ENCODE measurements at regions of chr1 and their contacts with region 1.

Region 1: GRCh38 chr1:112390775-112391602 is 5.0 kb upstream of the CTTNBP2NL start:
- DNase-seq: peak; percentile 74 to 90
- ATAC-seq: peak; percentile 78 to 82
- H3K4me3 ChIP-seq: peak overlapping the region; percentile 50
- H3K27ac ChIP-seq: peak overlapping the region; percentile 83 to 91
- H3K4me1 ChIP-seq: peaks cover 30% of the 10 kb centered on the region
- CTCF ChIP-seq: peak; percentile 78
- EP300 ChIP-seq: no peak
- POLR2A ChIP-seq: no peak
- RAD21 ChIP-seq: peak; percentile 85 to 86

Region 2: DNA sequence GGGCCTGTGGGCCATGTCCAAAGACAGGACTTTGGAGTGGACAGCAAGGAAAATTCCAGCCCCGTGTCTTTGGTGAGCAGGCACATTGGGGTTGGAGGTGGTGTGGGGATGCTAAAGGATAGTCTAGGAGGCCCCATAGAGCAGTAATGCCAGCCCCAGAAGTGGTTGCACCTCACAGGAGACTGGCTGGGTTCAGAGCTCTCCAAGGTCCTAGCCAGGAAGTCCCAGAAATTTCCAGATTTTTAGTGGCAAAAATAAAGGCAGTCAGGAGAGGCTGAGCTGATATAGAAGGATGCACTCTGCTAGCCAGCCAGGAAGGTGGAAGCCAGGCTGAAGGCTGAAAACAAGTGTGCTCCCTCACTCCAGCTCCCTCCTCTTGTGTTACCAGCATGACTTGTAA is 257.5 kb before region 1 on chr1:
- CTCF ChIA-PET with region 1: no interaction called
- POLR2A ChIA-PET with region 1: no interaction called
- DNase-seq: no peak
- ATAC-seq: no peak
- H3K4me3 ChIP-seq: no peak overlapping the region
- H3K27ac ChIP-seq: no peak overlapping the region
- H3K4me1 ChIP-seq: no peaks in the 10 kb centered on the region
- CTCF ChIP-seq: no peak
- EP300 ChIP-seq: no peak
- POLR2A ChIP-seq: no peak
- RAD21 ChIP-seq: no peak

Region 3: GRCh38 chr1:112369392-112370285 is 21.4 kb before region 1 on chr1:
- CTCF ChIA-PET with region 1: interaction called, 16 read pairs
- POLR2A ChIA-PET with region 1: no interaction called
- DNase-seq: peak; percentile 62 to 80
- ATAC-seq: peak; percentile 100
- H3K4me3 ChIP-seq: no peak overlapping the region
- H3K27ac ChIP-seq: no peak overlapping the region
- H3K4me1 ChIP-seq: no peaks in the 10 kb centered on the region
- CTCF ChIP-seq: peak; percentile 80
- EP300 ChIP-seq: no peak
- POLR2A ChIP-seq: no peak
- RAD21 ChIP-seq: peak; percentile 75 to 85

Region 4: DNA sequence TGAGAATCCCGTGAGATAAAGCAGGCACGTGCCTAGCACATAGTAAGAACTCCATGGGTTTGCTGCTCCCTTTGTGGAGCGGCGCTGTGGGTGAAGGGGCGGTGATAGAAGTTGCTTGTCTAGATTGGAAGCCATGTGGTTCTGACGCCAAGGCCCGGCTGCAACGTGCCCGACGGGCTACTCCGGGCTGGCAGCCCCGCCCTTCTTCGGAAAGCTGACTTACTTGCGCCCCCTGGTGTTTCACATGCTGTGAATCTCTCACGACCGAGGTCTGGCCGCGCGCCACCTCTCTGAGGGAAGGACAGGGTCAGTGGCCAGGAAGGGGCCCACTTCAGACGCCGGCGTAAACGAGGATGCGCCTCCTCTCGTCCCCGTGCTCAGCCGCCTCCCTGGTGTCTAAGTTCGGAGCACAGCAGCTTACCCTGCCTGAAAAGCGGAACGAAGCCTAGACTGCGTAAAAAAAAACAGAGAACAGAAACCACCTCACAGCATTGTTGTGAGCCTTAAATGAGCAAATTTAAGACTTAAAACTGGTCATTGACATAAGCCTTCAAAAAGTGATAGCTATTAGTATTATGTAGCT is 75.2 kb after region 1 on chr1:
- CTCF ChIA-PET with region 1: interaction called, 165 read pairs
- POLR2A ChIA-PET with region 1: interaction called, 10 read pairs
- DNase-seq: peak; percentile 43 to 88
- ATAC-seq: peak; percentile 93 to 97
- H3K4me3 ChIP-seq: peak overlapping the region; percentile 27; the same call in 2 of the 3 replicates
- H3K27ac ChIP-seq: peak overlapping the region; percentile 61 to 73; a peak in 5 of 6 replicates
- H3K4me1 ChIP-seq: peaks cover 7% of the 10 kb centered on the region; the same call in 1 of the 3 replicates
- CTCF ChIP-seq: peak; percentile 65
- EP300 ChIP-seq: no peak
- POLR2A ChIP-seq: no peak
- RAD21 ChIP-seq: peak; percentile 69 to 72

Region 5: DNA sequence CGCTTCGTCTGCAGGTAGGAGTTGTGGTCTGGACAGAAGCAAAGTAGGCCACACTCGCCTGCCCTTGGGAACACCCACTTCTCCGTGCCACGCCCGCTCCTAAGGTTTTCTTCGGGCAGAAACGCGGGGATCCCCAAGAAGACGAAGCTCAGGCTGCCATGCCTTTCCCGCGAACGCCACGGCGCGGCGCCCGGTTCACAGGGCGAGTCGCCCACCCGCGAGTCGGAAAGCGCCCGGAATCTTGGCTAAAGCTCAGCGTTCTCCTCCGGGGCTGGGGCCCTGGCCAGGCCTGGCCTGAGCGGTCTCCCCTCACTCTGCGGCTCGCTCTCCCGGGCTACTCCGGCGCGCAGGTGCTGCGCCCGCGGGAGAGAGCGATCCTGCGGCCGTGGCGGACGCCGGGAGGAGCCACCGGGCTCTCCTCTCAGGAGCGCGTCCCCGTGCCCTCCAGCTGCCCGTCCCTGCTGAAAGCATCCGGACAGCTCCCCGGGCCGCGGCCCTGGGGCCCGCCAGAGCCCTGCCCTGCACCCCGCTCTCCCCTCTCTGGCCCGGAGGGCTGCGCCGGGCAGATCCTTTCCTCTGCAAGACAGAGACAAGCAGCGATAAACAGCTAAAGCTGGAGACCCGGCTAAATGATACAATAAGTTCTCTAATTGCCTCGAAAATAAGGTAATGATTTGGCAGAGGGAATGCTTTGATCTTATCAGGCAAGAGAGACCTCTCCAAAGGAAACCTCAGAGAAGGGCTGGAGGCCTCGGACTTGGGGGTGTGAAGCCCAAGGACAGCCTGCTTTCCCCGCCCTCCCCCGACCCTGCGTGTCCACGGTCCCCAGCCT is 111.0 kb after region 1 on chr1:
- CTCF ChIA-PET with region 1: interaction called, 15 read pairs
- POLR2A ChIA-PET with region 1: interaction called, 5 read pairs
- DNase-seq: peak; percentile 25 to 57
- ATAC-seq: peak; percentile 82 to 86
- H3K4me3 ChIP-seq: peak overlapping the region; percentile 58
- H3K27ac ChIP-seq: peak overlapping the region; percentile 77 to 87
- H3K4me1 ChIP-seq: peaks cover 4% of the 10 kb centered on the region; the same call in 2 of the 3 replicates
- CTCF ChIP-seq: peak; percentile 51
- EP300 ChIP-seq: no peak
- POLR2A ChIP-seq: no peak
- RAD21 ChIP-seq: peak; percentile 56 to 69

Region 6: DNA sequence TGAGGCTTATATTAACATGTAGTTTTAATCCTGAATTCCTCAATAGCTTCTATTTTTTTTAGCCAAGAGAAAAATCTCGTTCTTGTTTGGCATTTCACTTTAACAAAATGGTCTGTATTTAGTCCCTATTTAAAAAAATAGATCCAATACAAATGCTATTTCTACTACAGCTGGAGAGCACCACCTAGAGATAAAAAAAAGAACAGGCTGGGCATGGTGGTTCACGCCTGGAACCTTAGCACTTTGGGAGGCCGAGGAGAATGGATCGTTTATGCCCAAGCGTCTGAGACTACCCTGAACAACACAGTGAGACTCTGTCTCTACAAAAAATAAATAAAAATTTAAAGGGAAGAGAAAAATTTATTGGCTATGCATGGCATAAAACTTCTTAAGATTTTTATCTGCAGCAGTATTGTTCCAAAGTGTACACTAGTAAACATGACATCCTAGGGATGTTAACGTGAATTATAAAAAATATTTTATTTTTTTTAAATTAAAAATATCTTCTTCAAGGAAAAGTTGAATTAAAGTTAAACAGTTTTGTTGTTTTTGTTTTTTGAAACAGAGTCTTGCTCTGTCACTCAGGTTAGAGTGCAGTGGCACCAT is 223.6 kb after region 1 on chr1:
- CTCF ChIA-PET with region 1: interaction called, 32 read pairs
- POLR2A ChIA-PET with region 1: interaction called, 12 read pairs
- DNase-seq: peak in 1 of 2 experiments; percentile 48
- ATAC-seq: peak in 1 of 2 experiments; percentile 41; a peak in 2 of 6 replicates
- H3K4me3 ChIP-seq: no peak overlapping the region
- H3K27ac ChIP-seq: no peak overlapping the region
- H3K4me1 ChIP-seq: peaks cover 8% of the 10 kb centered on the region; the same call in 2 of the 3 replicates
- CTCF ChIP-seq: peak; percentile 55
- EP300 ChIP-seq: no peak
- POLR2A ChIP-seq: no peak
- RAD21 ChIP-seq: peak; percentile 63 to 64

Region 7: GRCh38 chr1:112674439-112674985 is 283.5 kb after region 1 on chr1 and contains the start of gene MOV10:
- CTCF ChIA-PET with region 1: interaction called, 11 read pairs
- POLR2A ChIA-PET with region 1: interaction called, 5 read pairs
- DNase-seq: peak; percentile 35 to 69
- ATAC-seq: peak; percentile 74 to 85
- H3K4me3 ChIP-seq: peak within 1 kb of the TSS; percentile 92
- H3K27ac ChIP-seq: peak within 1 kb of the TSS; percentile 94 to 97
- H3K4me1 ChIP-seq: peaks cover 11% of the 10 kb centered on the region; the same call in 2 of the 3 replicates
- CTCF ChIP-seq: no peak
- EP300 ChIP-seq: no peak
- POLR2A ChIP-seq: 0 out of 2 replicates have a peak, but pooled peaks have one; percentile 23
- RAD21 ChIP-seq: no peak
- polyA plus RNA-seq, gene MOV10: 27.3 and 28.3 TPM in 2 replicates

Region 8: DNA sequence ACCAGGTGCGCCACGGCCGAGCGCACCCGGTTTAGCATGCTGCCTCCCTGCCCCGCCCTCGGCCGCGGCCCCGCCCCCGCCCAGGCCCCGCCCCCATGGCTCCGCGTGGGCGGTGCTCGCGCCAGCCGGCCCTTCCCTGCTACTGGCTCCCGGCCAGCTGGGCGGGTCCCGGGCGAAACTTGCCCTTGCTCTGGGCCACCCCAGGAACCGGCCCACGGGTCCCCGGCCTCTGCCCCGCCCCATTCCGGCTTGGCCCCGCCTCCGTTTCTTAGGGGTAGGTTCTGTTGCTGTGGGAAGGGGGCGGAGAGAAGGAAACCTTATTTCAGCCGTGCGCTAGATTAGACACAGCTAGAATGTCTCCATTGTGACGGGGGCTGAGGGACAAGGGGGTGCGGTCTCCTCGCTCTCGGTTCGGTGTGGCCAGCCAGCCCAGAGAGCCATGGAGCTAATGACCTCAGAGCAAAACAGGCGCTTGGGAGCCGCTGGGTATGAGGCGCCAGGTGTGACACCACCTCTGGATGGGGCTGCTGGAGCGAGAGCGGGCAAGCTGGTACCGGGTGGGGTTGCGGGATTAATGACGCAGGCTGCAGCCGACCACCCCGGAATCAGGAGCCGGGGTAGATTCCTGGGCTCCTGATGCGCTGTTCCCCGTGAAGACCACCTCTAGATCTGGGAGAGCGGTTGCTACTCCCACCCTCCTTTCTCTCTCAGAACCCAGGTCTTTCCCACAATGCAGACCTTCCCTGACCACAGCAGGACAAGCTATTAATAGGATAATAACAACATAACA is 324.5 kb after region 1 on chr1 and contains the start of gene PPM1J:
- CTCF ChIA-PET with region 1: interaction called, 13 read pairs
- POLR2A ChIA-PET with region 1: interaction called, 3 read pairs
- DNase-seq: peak; percentile 79 to 85
- ATAC-seq: peak; percentile 68 to 84
- H3K4me3 ChIP-seq: peak within 1 kb of the TSS; percentile 72
- H3K27ac ChIP-seq: peak within 1 kb of the TSS; percentile 55 to 84; a peak in 5 of 6 replicates
- H3K4me1 ChIP-seq: peaks cover 4% of the 10 kb centered on the region; the same call in 2 of the 3 replicates
- CTCF ChIP-seq: no peak
- EP300 ChIP-seq: no peak
- POLR2A ChIP-seq: no peak
- RAD21 ChIP-seq: no peak
- polyA plus RNA-seq, gene PPM1J: 0.62 and 0.66 TPM in 2 replicates

Measured in A549 (cell line).